ENCODE measurements at regions of chr11 and their contacts with region 1.

Region 1: DNA sequence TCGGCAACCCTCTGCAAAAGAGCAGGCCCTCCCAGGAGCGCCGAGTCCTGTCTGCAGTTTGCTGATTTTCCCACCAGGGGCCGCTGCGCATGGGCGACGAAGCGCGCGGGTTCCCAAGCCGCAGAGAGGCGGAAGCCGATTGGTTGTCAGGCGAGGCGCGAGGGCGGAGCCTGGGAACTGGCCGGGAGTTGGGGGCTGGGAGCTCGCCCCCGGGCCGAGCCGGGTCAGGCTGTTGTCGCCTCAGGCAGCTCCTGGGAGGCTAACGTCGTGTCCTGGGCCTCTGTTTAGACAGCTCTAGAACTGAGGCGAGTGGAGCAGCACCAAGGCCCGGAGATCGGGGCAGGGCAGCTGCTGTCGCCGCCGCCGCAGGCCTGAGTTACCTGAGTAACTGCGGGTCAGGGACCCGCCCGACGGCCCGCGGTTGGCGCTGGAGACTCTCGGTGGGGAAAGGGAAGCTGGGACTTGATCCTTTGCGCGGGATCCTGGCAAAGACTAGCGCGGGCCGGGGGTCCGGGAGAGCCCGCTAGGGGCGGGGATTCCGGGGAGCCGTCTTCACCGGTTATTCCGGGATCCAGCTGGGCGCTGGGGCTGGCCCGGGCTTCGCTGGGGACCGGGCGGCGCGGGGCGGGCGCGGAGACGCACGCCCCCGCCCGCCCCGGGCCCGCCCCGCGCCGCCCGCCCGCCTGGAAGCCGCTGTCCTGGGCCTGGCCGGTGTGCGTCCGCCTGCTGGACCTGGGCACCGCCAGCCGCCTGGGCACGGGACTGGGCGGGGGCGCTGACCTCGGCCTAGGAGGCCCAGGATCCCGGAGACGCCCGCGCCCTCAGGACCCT is at the start of gene STIM1:
- DNase-seq: peak; percentile 95 to 98 (median 97)
- H3K4me3 ChIP-seq: peak within 1 kb of the TSS; percentile 84
- H3K4me3 Mint-ChIP-seq: peak within 1 kb of the TSS; percentile 91 to 99 (median 93)
- H3K27ac ChIP-seq: peak within 1 kb of the TSS; percentile 86
- H3K27ac Mint-ChIP-seq: peak within 1 kb of the TSS; percentile 98 to 100 (median 99)
- H3K4me1 ChIP-seq: peaks cover 58% of the 10 kb centered on the region
- H3K4me1 Mint-ChIP-seq: peaks cover 63 to 68% (median 66%) of the 10 kb centered on the region in 3 donors
- H3K27me3 ChIP-seq: no peaks in the 10 kb centered on the region
- H3K27me3 Mint-ChIP-seq: peaks cover 0 to 3% of the 10 kb centered on the region in 2 donors
- total RNA-seq, gene STIM1: 45.6 to 46.0 TPM

Region 2: GRCh38 chr11:2992234-2992996 is 862.8 kb before region 1 on chr11 and contains the start of gene NAP1L4:
- CTCF ChIA-PET with region 1: no interaction called
- POLR2A ChIA-PET with region 1: no interaction called
- DNase-seq: peak; percentile 94 to 98 (median 95)
- H3K4me3 ChIP-seq: peak within 1 kb of the TSS; percentile 85
- H3K4me3 Mint-ChIP-seq: peak within 1 kb of the TSS; percentile 99 to 100 (median 99)
- H3K27ac ChIP-seq: peak within 1 kb of the TSS; percentile 86
- H3K27ac Mint-ChIP-seq: peak within 1 kb of the TSS; percentile 97 to 100 (median 98)
- H3K4me1 ChIP-seq: peaks cover 20% of the 10 kb centered on the region
- H3K4me1 Mint-ChIP-seq: peaks cover 31 to 36% (median 32%) of the 10 kb centered on the region in 3 donors
- H3K27me3 ChIP-seq: no peaks in the 10 kb centered on the region
- H3K27me3 Mint-ChIP-seq: peaks cover 0 to 3% of the 10 kb centered on the region in 2 donors
- total RNA-seq, gene NAP1L4: 273 to 280 TPM

Region 3: DNA sequence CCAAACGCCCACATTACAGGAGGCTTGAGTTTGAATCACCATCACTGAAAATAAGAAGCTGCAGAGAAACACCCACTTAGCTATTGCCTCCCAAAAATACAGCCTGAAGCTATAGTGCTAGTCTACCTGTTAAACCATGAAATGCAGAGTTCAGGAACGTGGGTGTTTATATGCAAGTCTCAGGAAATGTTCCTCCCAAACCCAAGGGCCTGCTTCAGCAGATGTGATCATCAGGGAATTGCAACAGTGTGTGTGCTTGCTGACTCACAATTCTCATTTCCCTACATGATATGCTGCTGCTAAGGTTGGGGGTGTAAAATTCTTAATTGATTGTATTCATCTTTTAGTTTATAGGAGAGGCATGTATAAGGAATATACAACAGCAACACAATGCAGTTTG is 107.5 kb before region 1 on chr11:
- CTCF ChIA-PET with region 1: no interaction called
- POLR2A ChIA-PET with region 1: no interaction called
- DNase-seq: no peak
- H3K4me3 ChIP-seq: no peak overlapping the region
- H3K4me3 Mint-ChIP-seq: no peak overlapping the region
- H3K27ac ChIP-seq: no peak overlapping the region
- H3K27ac Mint-ChIP-seq: peak overlapping the region in 3 of 8 donors; percentile 20 to 70 (median 50)
- H3K4me1 ChIP-seq: no peaks in the 10 kb centered on the region
- H3K4me1 Mint-ChIP-seq: peaks cover 0 to 2% (median 0%) of the 10 kb centered on the region in 3 donors
- H3K27me3 ChIP-seq: no peaks in the 10 kb centered on the region
- H3K27me3 Mint-ChIP-seq: no peaks in the 10 kb centered on the region

Region 4: GRCh38 chr11:3824714-3825472 is 30.3 kb before region 1 on chr11:
- CTCF ChIA-PET with region 1: interaction called, 23 read pairs
- POLR2A ChIA-PET with region 1: interaction called, 3 read pairs
- DNase-seq: peak; percentile 70 to 87 (median 74)
- H3K4me3 ChIP-seq: no peak overlapping the region
- H3K4me3 Mint-ChIP-seq: peak overlapping the region in 2 of 7 donors; percentile 35 to 54
- H3K27ac ChIP-seq: no peak overlapping the region
- H3K27ac Mint-ChIP-seq: peak overlapping the region; percentile 63 to 95 (median 90)
- H3K4me1 ChIP-seq: peaks cover 22% of the 10 kb centered on the region
- H3K4me1 Mint-ChIP-seq: peaks cover 25 to 51% (median 37%) of the 10 kb centered on the region in 3 donors
- H3K27me3 ChIP-seq: no peaks in the 10 kb centered on the region
- H3K27me3 Mint-ChIP-seq: no peaks in the 10 kb centered on the region

Region 5: GRCh38 chr11:3888876-3889275 is 33.7 kb after region 1 on chr11:
- CTCF ChIA-PET with region 1: interaction called, 22 read pairs
- POLR2A ChIA-PET with region 1: no interaction called
- DNase-seq: no peak
- H3K4me3 ChIP-seq: no peak overlapping the region
- H3K4me3 Mint-ChIP-seq: peak overlapping the region in 1 of 7 donors; percentile 30
- H3K27ac ChIP-seq: no peak overlapping the region
- H3K27ac Mint-ChIP-seq: peak overlapping the region in 5 of 8 donors; percentile 3 to 85 (median 42)
- H3K4me1 ChIP-seq: peaks cover 44% of the 10 kb centered on the region
- H3K4me1 Mint-ChIP-seq: peaks cover 63 to 83% (median 83%) of the 10 kb centered on the region in 3 donors
- H3K27me3 ChIP-seq: no peaks in the 10 kb centered on the region
- H3K27me3 Mint-ChIP-seq: no peaks in the 10 kb centered on the region

Region 6: GRCh38 chr11:3920148-3920852 is 65.1 kb after region 1 on chr11:
- CTCF ChIA-PET with region 1: interaction called, 27 read pairs
- POLR2A ChIA-PET with region 1: no interaction called
- DNase-seq: peak in 4 of 5 donors; percentile 35 to 79 (median 46)
- H3K4me3 ChIP-seq: no peak overlapping the region
- H3K4me3 Mint-ChIP-seq: peak overlapping the region in 5 of 7 donors; percentile 48 to 71 (median 54)
- H3K27ac ChIP-seq: no peak overlapping the region
- H3K27ac Mint-ChIP-seq: peak overlapping the region; percentile 22 to 87 (median 69)
- H3K4me1 ChIP-seq: peaks cover 31% of the 10 kb centered on the region
- H3K4me1 Mint-ChIP-seq: peaks cover 62 to 73% (median 71%) of the 10 kb centered on the region in 3 donors
- H3K27me3 ChIP-seq: no peaks in the 10 kb centered on the region
- H3K27me3 Mint-ChIP-seq: no peaks in the 10 kb centered on the region

Region 7: DNA sequence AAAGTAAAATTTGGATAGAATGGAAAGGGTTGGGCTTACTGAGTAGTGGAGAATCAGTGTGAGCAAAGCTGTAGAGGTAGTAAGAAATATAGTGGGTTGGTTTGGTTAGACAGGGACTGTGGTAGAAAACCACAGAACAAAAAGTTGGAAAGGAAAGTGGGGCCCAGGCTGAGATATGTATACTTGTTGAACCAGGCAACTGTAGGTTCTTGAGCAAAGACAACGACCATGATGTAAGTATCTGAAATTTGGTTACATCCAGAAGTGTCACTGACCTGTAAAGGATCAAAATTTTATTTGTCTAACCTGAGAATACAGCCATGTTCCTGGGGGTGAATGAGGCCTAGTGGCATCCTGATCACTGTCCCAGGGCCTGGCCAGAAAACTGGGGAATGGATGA is 114.4 kb after region 1 on chr11:
- CTCF ChIA-PET with region 1: interaction called, 11 read pairs
- POLR2A ChIA-PET with region 1: interaction called, 4 read pairs
- DNase-seq: peak in 1 of 5 donors; percentile 28
- H3K4me3 ChIP-seq: no peak overlapping the region
- H3K4me3 Mint-ChIP-seq: peak overlapping the region in 5 of 7 donors; percentile 19 to 51 (median 46)
- H3K27ac ChIP-seq: no peak overlapping the region
- H3K27ac Mint-ChIP-seq: peak overlapping the region; percentile 3 to 88 (median 68)
- H3K4me1 ChIP-seq: peaks cover 37% of the 10 kb centered on the region
- H3K4me1 Mint-ChIP-seq: peaks cover 77 to 80% (median 78%) of the 10 kb centered on the region in 3 donors
- H3K27me3 ChIP-seq: no peaks in the 10 kb centered on the region
- H3K27me3 Mint-ChIP-seq: no peaks in the 10 kb centered on the region

Region 8: DNA sequence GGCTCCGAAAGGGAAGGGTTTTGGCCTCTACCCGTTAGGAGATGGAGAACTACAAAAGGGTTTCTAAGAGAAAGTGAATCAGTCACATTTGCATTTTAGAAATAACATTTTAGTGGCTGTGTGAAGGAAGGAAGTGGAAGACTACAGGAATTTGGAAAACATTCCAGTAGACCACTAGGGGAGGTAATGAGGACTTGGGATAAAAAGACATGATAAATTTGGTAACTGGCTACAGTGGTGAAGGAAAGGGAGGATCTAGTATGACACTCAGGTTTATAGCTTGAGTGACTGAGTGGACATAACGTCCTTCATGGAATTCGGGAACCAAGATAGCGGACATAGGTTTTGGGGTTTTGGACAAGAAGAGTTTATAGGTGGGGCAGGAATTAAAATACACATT is 232.4 kb after region 1 on chr11:
- CTCF ChIA-PET with region 1: interaction called, 12 read pairs
- POLR2A ChIA-PET with region 1: interaction called, 4 read pairs
- DNase-seq: no peak
- H3K4me3 ChIP-seq: no peak overlapping the region
- H3K4me3 Mint-ChIP-seq: no peak overlapping the region
- H3K27ac ChIP-seq: no peak overlapping the region
- H3K27ac Mint-ChIP-seq: peak overlapping the region; percentile 47 to 98 (median 87)
- H3K4me1 ChIP-seq: peaks cover 35% of the 10 kb centered on the region
- H3K4me1 Mint-ChIP-seq: peaks cover 54 to 68% (median 55%) of the 10 kb centered on the region in 3 donors
- H3K27me3 ChIP-seq: no peaks in the 10 kb centered on the region
- H3K27me3 Mint-ChIP-seq: no peaks in the 10 kb centered on the region

Measured in CD8-positive, alpha-beta memory T cell (primary cell).